Activated B cell treated with CpG ODN at 0.5 μM for 24 hours (primary cell): ENCODE measurements at regions of chr18 and their contacts with region 1.

Region 1: DNA sequence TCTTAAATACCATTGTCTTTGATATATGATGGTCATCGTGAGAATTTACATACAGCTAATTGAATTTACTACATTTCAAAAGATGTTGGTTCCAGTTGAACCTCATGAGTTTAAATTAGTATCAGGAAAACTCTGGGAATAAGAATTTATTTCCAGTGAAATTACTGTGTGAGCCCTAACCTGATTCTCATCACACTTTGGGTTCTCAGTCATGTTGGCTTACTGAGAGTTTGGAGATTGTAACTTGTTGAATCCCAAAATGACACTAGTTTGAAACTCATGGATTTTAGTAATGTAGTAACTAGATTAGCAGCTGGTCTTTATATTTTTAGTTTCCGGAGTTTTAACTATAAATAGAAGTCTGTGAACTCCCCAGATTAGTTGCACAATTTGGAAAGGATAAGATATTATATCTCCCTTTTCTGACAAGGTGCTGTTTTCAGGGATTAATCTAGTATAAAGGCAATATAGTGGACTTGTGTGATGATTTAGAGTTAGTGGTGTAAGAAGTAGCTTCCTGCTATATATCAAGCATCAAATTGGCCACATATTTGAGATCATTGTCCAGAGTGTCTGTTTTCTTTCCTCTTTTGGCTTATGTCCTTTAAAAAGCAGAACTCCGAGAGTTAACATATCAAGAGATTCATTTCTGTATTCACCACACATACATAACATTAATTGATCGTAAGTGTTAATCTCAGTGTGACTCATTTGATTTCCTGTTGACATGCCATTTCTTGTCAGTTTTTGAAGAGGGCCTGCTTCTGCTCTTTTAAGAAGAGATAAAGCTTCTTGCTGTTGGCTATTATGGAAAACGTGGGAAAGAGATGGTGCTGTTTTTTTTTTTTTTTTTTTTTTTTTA is 15.7 kb downstream of the NDUFV2 start:
- DNase-seq: no peak
- ATAC-seq: peak; percentile 35
- H3K4me3 Mint-ChIP-seq: peak overlapping the region; percentile 86
- H3K27ac Mint-ChIP-seq: peak overlapping the region; percentile 99
- H3K4me1 Mint-ChIP-seq: peaks cover 84% of the 10 kb centered on the region
- H3K27me3 Mint-ChIP-seq: no peaks in the 10 kb centered on the region
- CTCF ChIP-seq: no peak

Region 2: DNA sequence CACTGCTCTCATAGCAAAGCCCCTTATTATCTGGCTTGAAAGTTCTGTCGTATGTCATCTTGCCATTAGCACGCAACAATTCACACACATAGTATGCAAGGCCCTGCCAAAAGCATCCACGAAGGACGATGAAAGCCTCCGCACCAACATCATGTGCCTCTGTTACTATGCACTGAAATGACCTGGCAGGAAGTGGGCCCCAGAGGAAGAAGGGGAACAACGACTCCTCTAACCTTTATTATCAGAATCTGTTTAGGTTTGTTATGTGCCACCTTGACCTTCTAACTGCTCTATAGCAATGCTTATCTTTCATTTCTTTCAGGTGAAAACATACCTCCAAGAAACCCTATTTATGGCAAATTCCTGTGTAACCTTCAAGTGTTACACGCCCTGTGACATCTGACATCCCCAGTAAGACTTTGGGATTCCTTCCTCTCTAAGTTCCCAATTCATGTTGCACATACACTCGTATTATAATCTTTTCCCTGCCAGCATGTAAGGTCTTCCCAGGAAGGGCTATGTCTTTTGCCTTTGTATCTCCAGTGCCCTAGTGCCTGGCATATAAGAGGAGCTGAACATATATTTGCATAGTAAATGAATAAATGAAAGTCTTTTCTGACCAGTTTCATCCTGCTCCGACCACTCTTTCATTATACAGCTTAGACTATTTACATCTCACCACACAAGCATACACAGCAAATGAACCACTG is 22.8 kb before region 1 on chr18:
- CTCF ChIA-PET with region 1: interaction called, 3 read pairs
- POLR2A ChIA-PET with region 1: interaction called, 30 read pairs
- intact Hi-C with region 1: no loop called
- DNase-seq: no peak
- ATAC-seq: peak; percentile 87
- H3K4me3 Mint-ChIP-seq: peak overlapping the region; percentile 74
- H3K27ac Mint-ChIP-seq: peak overlapping the region; percentile 92
- H3K4me1 Mint-ChIP-seq: peaks cover 21% of the 10 kb centered on the region
- H3K27me3 Mint-ChIP-seq: no peaks in the 10 kb centered on the region
- CTCF ChIP-seq: no peak

Region 3: DNA sequence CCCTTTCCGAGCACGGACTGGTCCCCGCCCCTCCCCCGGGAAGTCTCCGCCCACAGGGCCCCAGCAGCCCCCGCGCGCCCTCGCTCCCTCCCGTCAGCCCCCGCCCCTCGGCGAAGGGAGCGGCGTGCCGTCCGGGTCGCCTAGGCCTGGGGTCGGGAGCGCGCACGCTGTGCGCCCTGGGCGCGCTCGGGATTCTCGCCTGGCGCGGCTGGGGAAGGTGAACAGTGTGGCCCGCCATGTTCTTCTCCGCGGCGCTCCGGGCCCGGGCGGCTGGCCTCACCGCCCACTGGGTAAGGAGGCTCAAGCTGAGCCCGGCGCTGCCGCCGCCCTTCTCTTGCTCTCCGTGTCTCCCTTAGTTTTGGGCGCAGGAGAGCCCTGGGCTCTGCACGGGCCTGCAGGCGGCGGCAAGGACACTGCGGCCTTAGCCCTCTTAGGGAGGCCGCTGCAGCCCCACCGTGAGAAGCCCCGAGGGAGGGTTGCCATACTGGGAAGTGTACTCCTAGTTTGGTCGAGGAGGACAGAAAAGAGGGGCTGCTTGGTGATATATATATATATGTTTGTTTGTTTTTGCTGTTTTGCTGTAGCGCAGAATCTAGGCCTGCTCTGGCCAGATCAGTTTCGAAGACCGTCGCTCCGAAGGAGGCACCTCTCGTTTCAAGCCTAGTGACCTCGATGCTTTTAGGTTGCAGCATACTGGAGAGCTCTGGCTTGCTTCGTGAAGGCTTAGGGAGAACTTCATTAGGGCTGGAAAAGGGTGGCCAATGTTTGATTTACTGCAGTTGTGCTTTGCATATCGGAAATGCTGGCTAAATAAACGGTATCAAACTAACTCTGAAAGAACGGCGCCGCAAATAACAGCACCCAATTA is 15.5 kb before region 1 on chr18 and contains the start of gene NDUFV2:
- CTCF ChIA-PET with region 1: interaction called, 6 read pairs
- POLR2A ChIA-PET with region 1: interaction called, 186 read pairs
- intact Hi-C with region 1: loop called (anchors 1 kb)
- DNase-seq: peak; percentile 99
- ATAC-seq: peak; percentile 96
- H3K4me3 Mint-ChIP-seq: peak within 1 kb of the TSS; percentile 94
- H3K27ac Mint-ChIP-seq: peak within 1 kb of the TSS; percentile 94
- H3K4me1 Mint-ChIP-seq: peaks cover 51% of the 10 kb centered on the region
- H3K27me3 Mint-ChIP-seq: no peaks in the 10 kb centered on the region
- CTCF ChIP-seq: no peak
- total RNA-seq, gene NDUFV2: 168 and 169 TPM in 2 replicates

Region 4: GRCh38 chr18:9130806-9131205 is 12.6 kb after region 1 on chr18:
- CTCF ChIA-PET with region 1: interaction called, 4 read pairs
- POLR2A ChIA-PET with region 1: interaction called, 257 read pairs
- intact Hi-C with region 1: loop called (anchors 1 kb)
- DNase-seq: no peak
- ATAC-seq: no peak
- H3K4me3 Mint-ChIP-seq: no peak overlapping the region
- H3K27ac Mint-ChIP-seq: no peak overlapping the region
- H3K4me1 Mint-ChIP-seq: peaks cover 24% of the 10 kb centered on the region
- H3K27me3 Mint-ChIP-seq: no peaks in the 10 kb centered on the region
- CTCF ChIP-seq: no peak